ENCODE measurements at regions of chrX and their contacts with region 1.

Region 1: GRCh38 chrX:16445166-16445752 is 204.7 kb upstream of the S100G start:
- DNase-seq: peak; percentile 42 to 49 (median 46)
- H3K4me3 ChIP-seq: no peak overlapping the region
- H3K4me3 Mint-ChIP-seq: no peak overlapping the region
- H3K27ac ChIP-seq: no peak overlapping the region
- H3K27ac Mint-ChIP-seq: peak overlapping the region in 1 of 7 donors; percentile 41
- H3K4me1 ChIP-seq: no peaks in the 10 kb centered on the region
- H3K4me1 Mint-ChIP-seq: peaks cover 0 to 12% (median 2%) of the 10 kb centered on the region in 4 donors
- H3K27me3 ChIP-seq: no peaks in the 10 kb centered on the region
- H3K27me3 Mint-ChIP-seq: no peaks in the 10 kb centered on the region

Region 2: DNA sequence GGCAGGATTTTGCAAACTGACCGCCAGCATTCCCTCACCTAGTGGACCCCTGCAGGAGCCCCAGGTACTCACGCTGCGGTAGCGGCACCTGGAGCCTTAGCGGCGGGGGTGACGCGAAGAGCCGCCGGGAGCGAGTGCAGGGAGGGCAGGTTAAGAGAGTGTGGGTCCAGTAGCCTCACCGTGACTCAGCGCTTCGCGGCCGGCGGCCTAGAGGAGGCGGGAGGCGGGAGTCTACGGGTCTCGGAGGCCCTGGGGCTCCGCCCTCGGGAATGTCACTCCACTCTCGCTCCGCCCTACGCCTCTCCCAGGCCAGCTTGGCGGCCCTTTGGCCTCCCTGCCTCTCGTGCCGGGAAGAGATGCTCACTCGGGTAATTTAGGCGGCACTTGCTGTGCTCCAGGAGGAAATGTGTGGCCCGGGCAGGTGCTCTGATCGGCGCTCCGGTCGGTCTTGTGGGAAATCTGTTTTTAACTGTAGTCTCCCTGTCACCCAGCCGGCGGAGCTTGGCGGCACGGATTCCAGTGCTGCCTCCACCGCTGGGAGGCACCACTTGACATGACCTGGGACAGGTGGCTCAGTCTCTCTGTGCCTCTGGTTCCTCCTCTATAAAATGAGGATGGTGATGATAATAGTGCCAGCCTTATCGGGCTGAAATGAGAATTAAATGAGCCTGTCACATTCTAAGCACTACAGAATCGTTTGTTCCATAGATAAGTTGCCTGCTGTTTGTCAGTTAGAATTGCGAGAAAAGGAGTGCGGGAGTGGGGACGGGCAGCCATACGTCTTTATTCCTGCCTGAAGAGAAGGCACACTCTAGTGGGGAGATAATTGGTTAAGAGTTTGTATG is 951.9 kb before region 1 on chrX and contains the start of gene PIR:
- CTCF ChIA-PET with region 1: interaction called, 3 read pairs
- POLR2A ChIA-PET with region 1: no interaction called
- intact Hi-C with region 1: loop called (anchors 2 kb)
- DNase-seq: peak; percentile 2 to 37 (median 14)
- H3K4me3 ChIP-seq: peak within 1 kb of the TSS; percentile 23 to 32
- H3K4me3 Mint-ChIP-seq: peak within 1 kb of the TSS; percentile 73 to 88 (median 80)
- H3K27ac ChIP-seq: no peak within 1 kb of the TSS
- H3K27ac Mint-ChIP-seq: no peak within 1 kb of the TSS
- H3K4me1 ChIP-seq: peaks cover 3% of the 10 kb centered on the region
- H3K4me1 Mint-ChIP-seq: peaks cover 4 to 8% (median 5%) of the 10 kb centered on the region in 4 donors
- H3K27me3 ChIP-seq: no peaks in the 10 kb centered on the region
- H3K27me3 Mint-ChIP-seq: peaks cover 0 to 4% of the 10 kb centered on the region in 2 donors
- total RNA-seq, gene PIR: 0.53 TPM in 1 of 2 experiments, not detected in the other

Region 3: GRCh38 chrX:16123222-16123786 is 322.0 kb before region 1 on chrX and contains the start of gene GRPR:
- CTCF ChIA-PET with region 1: no interaction called
- POLR2A ChIA-PET with region 1: no interaction called
- intact Hi-C with region 1: loop called (anchors 1 kb)
- DNase-seq: peak; percentile 43 to 57 (median 43)
- H3K4me3 ChIP-seq: no peak within 1 kb of the TSS
- H3K4me3 Mint-ChIP-seq: peak within 1 kb of the TSS in 3 of 8 donors; percentile 49 to 63 (median 51)
- H3K27ac ChIP-seq: no peak within 1 kb of the TSS
- H3K27ac Mint-ChIP-seq: no peak within 1 kb of the TSS
- H3K4me1 ChIP-seq: no peaks in the 10 kb centered on the region
- H3K4me1 Mint-ChIP-seq: peaks cover 4 to 11% (median 7%) of the 10 kb centered on the region in 4 donors
- H3K27me3 ChIP-seq: no peaks in the 10 kb centered on the region
- H3K27me3 Mint-ChIP-seq: peaks cover 3 to 7% of the 10 kb centered on the region in 2 donors
- total RNA-seq, gene GRPR: 0.23 to 0.33 TPM

Region 4: DNA sequence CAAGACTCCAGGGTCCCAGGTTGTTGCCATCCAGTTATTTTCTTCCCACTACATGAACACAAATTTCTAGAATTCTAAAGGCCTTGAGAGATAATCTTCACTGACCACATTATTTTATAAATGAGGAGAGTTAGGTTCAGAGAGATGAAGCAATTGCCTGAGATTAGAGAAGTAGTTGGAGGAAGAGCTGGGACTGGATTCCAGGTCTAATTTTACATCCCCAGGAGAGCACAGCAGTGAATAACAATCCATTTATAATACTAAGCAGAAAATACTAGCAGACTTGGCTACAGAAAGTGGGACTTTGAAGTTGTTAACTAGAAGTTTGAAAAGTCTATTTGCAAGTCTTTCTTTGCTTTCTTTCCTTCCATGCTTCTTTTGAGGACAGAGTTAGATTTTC is 26.6 kb before region 1 on chrX:
- CTCF ChIA-PET with region 1: no interaction called
- POLR2A ChIA-PET with region 1: no interaction called
- intact Hi-C with region 1: no loop called
- DNase-seq: no peak
- H3K4me3 ChIP-seq: no peak overlapping the region
- H3K4me3 Mint-ChIP-seq: no peak overlapping the region
- H3K27ac ChIP-seq: no peak overlapping the region
- H3K27ac Mint-ChIP-seq: no peak overlapping the region
- H3K4me1 ChIP-seq: no peaks in the 10 kb centered on the region
- H3K4me1 Mint-ChIP-seq: peaks cover 0 to under 1% (median 0%) of the 10 kb centered on the region in 4 donors
- H3K27me3 ChIP-seq: no peaks in the 10 kb centered on the region
- H3K27me3 Mint-ChIP-seq: peaks cover 0 to 2% of the 10 kb centered on the region in 2 donors

Region 5: GRCh38 chrX:16786139-16786790 is 341.0 kb after region 1 on chrX and contains the start of gene TXLNG:
- CTCF ChIA-PET with region 1: no interaction called
- POLR2A ChIA-PET with region 1: no interaction called
- intact Hi-C with region 1: no loop called
- DNase-seq: peak; percentile 97 to 99 (median 99)
- H3K4me3 ChIP-seq: peak within 1 kb of the TSS; percentile 63 to 70
- H3K4me3 Mint-ChIP-seq: peak within 1 kb of the TSS; percentile 92 to 96 (median 94)
- H3K27ac ChIP-seq: peak within 1 kb of the TSS; percentile 77
- H3K27ac Mint-ChIP-seq: peak within 1 kb of the TSS; percentile 78 to 96 (median 92)
- H3K4me1 ChIP-seq: peaks cover 12% of the 10 kb centered on the region
- H3K4me1 Mint-ChIP-seq: peaks cover 13 to 36% (median 21%) of the 10 kb centered on the region in 4 donors
- H3K27me3 ChIP-seq: no peaks in the 10 kb centered on the region
- H3K27me3 Mint-ChIP-seq: no peaks in the 10 kb centered on the region
- total RNA-seq, gene TXLNG: 17.8 to 19.8 TPM

Measured in CD4-positive, alpha-beta memory T cell (primary cell).